SK-N-SH (cell line): ENCODE measurements at regions of chr12 and their contacts with region 1.

Region 1: DNA sequence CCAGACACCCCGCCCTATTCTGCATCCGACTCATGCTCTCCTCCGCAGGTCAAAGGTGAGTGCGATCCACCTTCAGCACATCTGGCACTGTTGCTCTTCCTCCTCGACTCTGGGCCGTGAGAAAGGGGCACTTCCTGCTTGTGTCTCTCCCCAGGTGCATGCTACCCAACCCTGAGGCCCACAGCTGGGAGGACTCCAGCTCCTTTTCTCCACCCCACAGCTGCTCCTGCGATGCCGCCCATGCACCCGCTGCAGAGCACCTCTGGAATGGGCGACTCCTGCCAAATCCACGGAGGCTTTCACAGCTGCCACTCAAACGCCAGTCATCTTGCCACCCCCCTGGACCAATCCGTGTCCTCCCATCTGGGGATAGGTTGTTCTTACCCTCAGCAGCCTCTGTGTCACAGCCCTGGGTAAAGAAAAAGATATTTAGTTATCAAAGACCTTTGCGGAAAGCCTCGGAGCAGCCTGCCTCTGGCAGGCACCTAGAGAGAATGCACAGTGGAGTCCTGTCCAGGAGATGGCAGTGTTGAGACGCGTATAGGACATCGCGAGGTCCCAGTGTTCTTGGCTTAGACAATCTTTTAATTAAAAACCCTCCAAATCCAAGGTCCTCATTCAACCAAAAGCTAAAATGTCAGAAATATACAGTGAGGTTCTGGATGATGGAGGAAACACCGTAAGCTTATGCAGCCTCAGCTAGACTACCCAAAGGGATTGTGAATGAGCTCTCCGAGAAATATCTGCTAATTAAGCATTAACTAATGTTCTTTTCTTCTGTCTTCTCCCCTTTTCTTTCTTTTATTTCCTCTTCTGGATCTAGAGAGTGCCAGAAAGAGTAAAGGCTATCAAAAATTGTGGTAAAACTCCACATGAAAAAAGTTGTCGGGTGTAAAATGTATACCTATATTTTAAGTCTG is 54.3 kb downstream of the MYRFL start:
- DNase-seq: peak; percentile 76
- H3K4me3 ChIP-seq: peak overlapping the region; percentile 35 to 37; a peak in 2 of 4 replicates
- H3K27ac ChIP-seq: no peak overlapping the region
- H3K4me1 ChIP-seq: peaks cover 0 to 5% of the 10 kb centered on the region in 2 experiments; a peak in 1 of 4 replicates
- H3K27me3 ChIP-seq: no peaks in the 10 kb centered on the region
- CTCF ChIP-seq: peak; percentile 94
- EP300 ChIP-seq: no peak
- RAD21 ChIP-seq: peak; percentile 98

Region 2: DNA sequence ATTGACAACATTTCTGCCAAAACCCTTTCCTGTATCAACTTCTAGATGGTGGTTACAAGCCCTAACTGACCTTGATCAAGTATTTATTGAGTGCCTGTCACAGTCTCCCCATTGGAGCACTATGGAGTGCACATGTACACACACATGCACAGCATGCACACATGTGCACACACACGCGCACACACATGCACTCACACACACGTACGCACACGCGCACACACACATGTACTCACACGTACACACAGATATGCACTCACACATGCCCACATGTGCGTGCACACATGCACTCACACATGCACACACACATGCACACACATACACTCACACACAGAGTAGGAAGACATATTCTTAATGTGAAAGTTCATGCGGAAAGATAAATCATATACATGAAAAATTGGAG is 10.6 kb before region 1 on chr12:
- CTCF ChIA-PET with region 1: interaction called, 37 read pairs
- POLR2A ChIA-PET with region 1: no interaction called
- DNase-seq: no peak
- H3K4me3 ChIP-seq: no peak overlapping the region
- H3K27ac ChIP-seq: no peak overlapping the region
- H3K4me1 ChIP-seq: peaks cover 0 to 6% of the 10 kb centered on the region in 2 experiments; a peak in 1 of 4 replicates
- H3K27me3 ChIP-seq: no peaks in the 10 kb centered on the region
- CTCF ChIP-seq: no peak
- EP300 ChIP-seq: no peak
- RAD21 ChIP-seq: no peak

Region 3: DNA sequence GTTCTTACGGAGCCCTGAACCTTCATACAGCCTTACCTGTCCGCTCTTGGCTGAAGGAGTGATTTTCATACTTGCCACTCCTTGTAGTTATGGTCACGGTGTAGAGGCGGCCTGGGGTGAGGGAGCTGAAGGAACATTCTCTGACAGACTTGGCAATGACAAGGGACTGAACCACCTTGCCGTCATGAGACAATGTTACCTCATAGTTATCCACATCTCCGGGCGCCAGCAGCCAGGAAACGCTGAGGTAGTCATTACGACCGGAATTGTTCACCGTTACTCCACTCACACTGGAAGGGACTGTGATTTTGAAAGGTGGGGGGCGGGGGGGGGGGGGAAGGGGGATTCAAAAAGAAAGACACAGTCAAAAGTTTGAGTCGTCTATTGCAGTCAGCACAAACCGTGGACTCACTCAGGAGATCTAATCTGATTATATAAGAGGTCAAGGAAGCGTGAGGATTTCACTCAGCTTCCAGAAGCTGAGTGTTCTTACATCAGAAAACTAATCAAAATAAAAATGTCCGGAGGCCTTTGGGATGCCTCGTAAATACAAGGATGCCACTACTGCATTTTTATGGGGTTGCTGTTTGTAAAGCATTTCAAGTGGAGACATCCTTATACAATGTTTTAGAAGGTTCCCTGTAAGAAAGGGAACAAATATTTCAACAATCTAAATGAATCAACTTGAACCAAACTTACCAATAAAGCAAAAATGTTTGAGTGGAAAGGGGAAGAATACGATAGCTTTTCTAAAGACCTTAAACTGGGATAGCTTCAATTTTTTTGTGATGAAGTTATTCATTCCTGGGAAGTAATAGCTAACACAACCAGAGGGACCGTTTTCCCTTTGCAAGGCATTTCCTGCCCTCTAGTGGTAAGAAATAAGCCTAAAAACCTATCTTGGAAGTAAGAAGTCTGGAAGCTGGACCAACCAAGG is 697.3 kb after region 1 on chr12:
- CTCF ChIA-PET with region 1: interaction called, 94 read pairs
- POLR2A ChIA-PET with region 1: no interaction called
- DNase-seq: peak; percentile 53
- H3K4me3 ChIP-seq: peak overlapping the region in 1 of 2 experiments; percentile 21; a peak in 1 of 4 replicates
- H3K27ac ChIP-seq: peak overlapping the region in 1 of 2 experiments; percentile 42; a peak in 1 of 4 replicates
- H3K4me1 ChIP-seq: no peaks in the 10 kb centered on the region
- H3K27me3 ChIP-seq: no peaks in the 10 kb centered on the region
- CTCF ChIP-seq: peak; percentile 89
- EP300 ChIP-seq: no peak
- RAD21 ChIP-seq: peak; percentile 95

Region 4: DNA sequence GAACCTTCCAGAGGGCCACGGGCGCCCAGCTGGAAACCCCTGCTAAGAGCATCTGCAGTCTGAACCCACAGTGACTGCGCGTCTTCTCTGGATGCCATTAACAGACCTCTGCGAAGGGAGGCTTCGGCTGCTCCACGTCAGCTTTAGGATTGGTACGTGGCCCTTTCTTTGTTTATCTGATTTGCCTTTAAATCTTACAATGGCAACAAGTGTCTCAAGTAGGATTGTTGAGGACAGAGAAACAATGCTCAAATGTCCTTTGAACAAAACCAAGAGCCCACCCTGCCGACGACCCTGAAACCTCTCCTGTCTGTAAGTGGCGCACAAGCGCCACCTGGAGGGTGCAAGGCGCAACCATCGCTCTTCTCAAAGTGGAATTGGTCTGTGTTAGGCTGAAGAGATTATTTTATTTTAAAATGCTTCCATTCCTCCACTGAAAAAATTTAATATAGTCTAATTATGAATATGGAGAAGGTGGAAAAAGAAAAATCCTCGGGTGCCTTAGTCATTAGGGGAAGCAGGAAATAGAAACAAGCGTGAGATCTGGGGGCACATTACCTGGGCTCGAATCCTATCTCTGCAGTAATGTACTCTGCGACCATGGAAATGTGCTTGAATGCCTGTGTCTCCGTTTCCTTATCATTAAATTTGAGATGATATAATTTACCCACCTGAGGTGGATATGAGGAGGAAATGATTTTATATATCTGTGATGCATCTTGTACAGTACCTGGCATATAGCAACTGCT is 840.5 kb after region 1 on chr12:
- CTCF ChIA-PET with region 1: interaction called, 38 read pairs
- POLR2A ChIA-PET with region 1: no interaction called
- DNase-seq: peak; percentile 48
- H3K4me3 ChIP-seq: peak overlapping the region; percentile 9 to 53; a peak in 2 of 4 replicates
- H3K27ac ChIP-seq: no peak overlapping the region
- H3K4me1 ChIP-seq: peaks cover 0 to 2% of the 10 kb centered on the region in 2 experiments; a peak in 2 of 4 replicates
- H3K27me3 ChIP-seq: no peaks in the 10 kb centered on the region
- CTCF ChIP-seq: peak; percentile 99
- EP300 ChIP-seq: no peak
- RAD21 ChIP-seq: peak; percentile 81